ENCODE measurements at regions of chr5 and their contacts with region 1.

Region 1: GRCh38 chr5:150458819-150459557 is 9.4 kb upstream of the RPS14 start:
- DNase-seq: peak; percentile 89
- H3K4me3 Mint-ChIP-seq: peak overlapping the region; percentile 19
- H3K27ac Mint-ChIP-seq: peak overlapping the region; percentile 74
- H3K4me1 Mint-ChIP-seq: peaks cover 45% of the 10 kb centered on the region
- H3K27me3 Mint-ChIP-seq: no peaks in the 10 kb centered on the region

Region 2: GRCh38 chr5:150469718-150470469 is 10.9 kb after region 1 on chr5:
- CTCF ChIA-PET with region 1: no interaction called
- DNase-seq: no peak
- H3K4me3 Mint-ChIP-seq: no peak overlapping the region
- H3K27ac Mint-ChIP-seq: no peak overlapping the region
- H3K4me1 Mint-ChIP-seq: no peaks in the 10 kb centered on the region
- H3K27me3 Mint-ChIP-seq: peaks cover 13% of the 10 kb centered on the region

Region 3: GRCh38 chr5:150523472-150524350 is 64.7 kb after region 1 on chr5:
- CTCF ChIA-PET with region 1: interaction called, 18 read pairs
- DNase-seq: peak; percentile 40
- H3K4me3 Mint-ChIP-seq: no peak overlapping the region
- H3K27ac Mint-ChIP-seq: no peak overlapping the region
- H3K4me1 Mint-ChIP-seq: no peaks in the 10 kb centered on the region
- H3K27me3 Mint-ChIP-seq: no peaks in the 10 kb centered on the region

Region 4: DNA sequence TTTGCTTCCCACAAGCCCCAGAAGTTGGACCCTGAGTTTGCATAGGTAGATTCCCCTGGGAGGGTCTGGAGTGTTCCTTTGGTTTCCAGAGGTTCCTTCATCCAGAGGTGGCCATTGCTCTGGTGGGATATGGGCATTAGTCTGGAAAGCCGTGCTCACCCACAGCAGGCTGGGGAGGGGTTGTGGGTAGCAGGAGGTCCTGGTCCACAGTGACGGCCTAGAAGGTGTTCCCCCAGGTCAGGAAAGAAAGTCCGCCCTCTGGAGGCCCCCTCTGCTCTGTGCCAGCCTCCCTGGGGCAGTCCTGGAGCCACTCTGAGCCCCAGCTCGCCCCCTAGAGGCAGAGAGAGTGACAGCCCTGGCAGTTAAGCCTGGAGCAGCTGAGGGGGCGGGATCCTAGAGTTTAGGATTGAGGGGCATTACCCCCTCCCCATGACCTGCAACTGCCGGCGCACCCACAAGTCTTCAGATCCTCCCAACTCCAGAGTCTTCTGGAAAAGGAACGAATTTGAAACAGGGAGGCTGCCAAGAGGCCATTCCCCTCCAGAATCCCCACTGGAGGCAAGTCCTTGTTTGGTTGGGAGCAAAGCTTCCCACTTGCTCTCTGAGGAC is 85.7 kb after region 1 on chr5:
- CTCF ChIA-PET with region 1: interaction called, 14 read pairs
- DNase-seq: peak; percentile 73
- H3K4me3 Mint-ChIP-seq: no peak overlapping the region
- H3K27ac Mint-ChIP-seq: no peak overlapping the region
- H3K4me1 Mint-ChIP-seq: no peaks in the 10 kb centered on the region
- H3K27me3 Mint-ChIP-seq: peaks cover 6% of the 10 kb centered on the region

Region 5: GRCh38 chr5:150560401-150561193 is 101.6 kb after region 1 on chr5:
- CTCF ChIA-PET with region 1: interaction called, 18 read pairs
- DNase-seq: peak; percentile 91
- H3K4me3 Mint-ChIP-seq: no peak overlapping the region
- H3K27ac Mint-ChIP-seq: no peak overlapping the region
- H3K4me1 Mint-ChIP-seq: no peaks in the 10 kb centered on the region
- H3K27me3 Mint-ChIP-seq: peaks cover 7% of the 10 kb centered on the region

Measured in activated naive CD4-positive, alpha-beta T cell treated with anti-CD3 and anti-CD28 coated beads, Interleukin-2, amount 10 ng/mL, durations not matched to agents 7 days and 5 days (primary cell).